BJ (cell line): ENCODE measurements at regions of chr11 and their contacts with region 1.

Region 1: DNA sequence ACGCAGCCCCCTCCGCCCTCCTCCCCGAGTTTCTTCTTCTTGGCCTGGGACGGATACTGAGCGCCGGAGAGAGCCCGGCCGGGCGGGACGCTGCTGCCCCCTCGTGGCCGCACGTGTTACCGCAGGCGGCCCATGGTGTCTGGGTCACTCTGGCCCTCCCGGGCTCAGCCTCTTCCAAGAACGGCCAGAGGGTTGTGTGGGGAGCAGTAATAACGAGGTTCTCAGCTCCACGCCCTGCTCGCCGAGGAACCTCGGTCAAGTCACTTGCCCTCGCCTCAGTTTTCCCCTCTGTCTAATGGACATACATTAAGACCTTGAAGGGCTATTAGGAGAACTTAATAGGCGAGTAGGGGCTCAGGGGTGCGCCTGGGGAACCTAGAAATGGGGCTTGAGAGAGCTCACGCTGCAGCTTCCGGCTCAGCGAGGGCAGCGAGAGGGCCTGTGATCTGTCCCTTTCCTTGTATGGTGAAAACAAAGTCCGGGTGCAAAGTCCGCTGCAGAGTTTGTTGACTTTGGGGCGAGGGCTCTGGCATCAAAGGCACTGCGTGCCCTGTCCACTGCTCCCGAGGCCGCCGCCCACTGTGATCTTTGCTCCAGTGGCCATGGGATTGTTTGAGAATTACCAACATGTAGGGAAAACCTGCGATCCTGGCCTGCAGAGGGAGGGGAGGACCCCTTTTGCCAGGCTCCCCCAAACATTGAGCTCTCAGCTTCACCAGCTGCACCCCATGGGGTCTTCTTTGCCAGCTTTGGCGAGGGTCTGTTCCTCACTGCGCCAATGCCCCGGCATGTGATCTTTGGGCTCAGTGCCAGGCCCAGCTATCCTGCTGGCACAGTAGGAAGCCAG is 14.4 kb upstream of the LRP5 start:
- DNase-seq: no peak
- H3K4me3 ChIP-seq: no peak overlapping the region
- H3K27me3 ChIP-seq: no peaks in the 10 kb centered on the region; the same call in 1 of the 2 replicates
- CTCF ChIP-seq: peak; percentile 100

Region 2: GRCh38 chr11:68093565-68093964 is 204.5 kb before region 1 on chr11:
- CTCF ChIA-PET with region 1: no interaction called
- POLR2A ChIA-PET with region 1: no interaction called
- DNase-seq: no peak
- H3K4me3 ChIP-seq: no peak overlapping the region
- H3K27me3 ChIP-seq: no peaks in the 10 kb centered on the region
- CTCF ChIP-seq: no peak

Region 3: GRCh38 chr11:68213555-68214174 is 84.4 kb before region 1 on chr11:
- CTCF ChIA-PET with region 1: interaction called, 34 read pairs
- POLR2A ChIA-PET with region 1: no interaction called
- DNase-seq: peak; percentile 33
- H3K4me3 ChIP-seq: peak overlapping the region; percentile 96
- H3K27me3 ChIP-seq: peaks cover 5% of the 10 kb centered on the region; the same call in 1 of the 2 replicates
- CTCF ChIP-seq: no peak

Region 4: DNA sequence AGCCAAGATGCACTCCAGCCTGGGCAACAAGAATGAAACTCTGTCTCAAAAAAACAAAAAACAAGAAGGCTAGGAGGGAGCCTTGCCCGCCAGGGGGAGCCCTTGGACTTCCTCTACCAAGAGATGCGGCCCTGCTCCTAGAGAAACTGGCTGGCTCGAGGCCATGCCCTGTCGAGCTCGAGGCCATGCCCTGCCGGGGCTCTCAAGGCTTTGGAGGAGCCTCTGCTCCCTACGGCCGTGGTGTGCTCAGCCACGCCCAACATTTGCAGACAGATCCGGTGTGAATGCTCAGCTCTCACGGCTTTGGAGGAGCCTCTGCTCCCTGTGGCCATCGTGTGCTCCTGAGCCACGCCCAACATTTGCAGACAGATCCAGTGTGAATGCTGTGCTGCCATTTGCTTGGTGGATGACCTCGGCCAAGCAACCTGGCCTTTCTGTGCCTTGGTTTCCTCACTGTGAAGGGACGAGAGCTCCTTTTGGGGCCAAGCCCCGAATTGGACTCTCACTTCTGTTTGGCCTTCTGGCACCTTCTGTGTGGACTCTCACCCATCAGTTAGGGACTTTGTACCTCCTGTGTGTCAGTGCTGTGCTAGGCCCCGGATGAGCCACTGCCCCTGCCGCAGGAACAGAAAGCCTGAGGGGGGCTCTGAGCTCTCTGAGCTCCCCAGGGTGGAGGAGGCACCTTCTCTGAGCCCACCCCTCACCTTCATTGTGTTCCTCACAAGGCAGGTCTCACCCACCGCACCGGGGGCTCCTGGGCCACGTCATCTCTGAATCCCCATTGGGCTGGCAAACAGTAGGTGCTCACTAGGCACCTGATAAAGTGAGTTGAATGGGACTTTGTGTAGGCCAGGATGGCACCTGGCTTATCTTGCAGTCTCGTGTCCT is 40.3 kb before region 1 on chr11:
- CTCF ChIA-PET with region 1: interaction called, 93 read pairs
- POLR2A ChIA-PET with region 1: no interaction called
- DNase-seq: no peak
- H3K4me3 ChIP-seq: no peak overlapping the region
- H3K27me3 ChIP-seq: no peaks in the 10 kb centered on the region
- CTCF ChIP-seq: peak; percentile 86

Region 5: GRCh38 chr11:68271781-68272608 is 26.0 kb before region 1 on chr11 and contains the start of gene C11orf24:
- CTCF ChIA-PET with region 1: interaction called, 28 read pairs
- POLR2A ChIA-PET with region 1: no interaction called
- DNase-seq: peak; percentile 57
- H3K4me3 ChIP-seq: peak within 1 kb of the TSS; percentile 98
- H3K27me3 ChIP-seq: no peaks in the 10 kb centered on the region
- CTCF ChIP-seq: no peak
- polyA plus RNA-seq, gene C11orf24: 64.3 and 97.3 TPM in 2 replicates

Region 6: GRCh38 chr11:68311160-68312116 is 13.4 kb after region 1 on chr11:
- CTCF ChIA-PET with region 1: interaction called, 15 read pairs
- POLR2A ChIA-PET with region 1: no interaction called
- DNase-seq: no peak
- H3K4me3 ChIP-seq: no peak overlapping the region; the same call in 1 of the 2 replicates
- H3K27me3 ChIP-seq: no peaks in the 10 kb centered on the region
- CTCF ChIP-seq: no peak

Region 7: GRCh38 chr11:68406324-68407313 is 108.6 kb after region 1 on chr11:
- CTCF ChIA-PET with region 1: interaction called, 3 read pairs
- POLR2A ChIA-PET with region 1: interaction called, 14 read pairs
- DNase-seq: no peak
- H3K4me3 ChIP-seq: no peak overlapping the region
- H3K27me3 ChIP-seq: no peaks in the 10 kb centered on the region
- CTCF ChIP-seq: no peak